PC-9 (cell line): ENCODE measurements at regions of chr16 and their contacts with region 1.

Region 1: DNA sequence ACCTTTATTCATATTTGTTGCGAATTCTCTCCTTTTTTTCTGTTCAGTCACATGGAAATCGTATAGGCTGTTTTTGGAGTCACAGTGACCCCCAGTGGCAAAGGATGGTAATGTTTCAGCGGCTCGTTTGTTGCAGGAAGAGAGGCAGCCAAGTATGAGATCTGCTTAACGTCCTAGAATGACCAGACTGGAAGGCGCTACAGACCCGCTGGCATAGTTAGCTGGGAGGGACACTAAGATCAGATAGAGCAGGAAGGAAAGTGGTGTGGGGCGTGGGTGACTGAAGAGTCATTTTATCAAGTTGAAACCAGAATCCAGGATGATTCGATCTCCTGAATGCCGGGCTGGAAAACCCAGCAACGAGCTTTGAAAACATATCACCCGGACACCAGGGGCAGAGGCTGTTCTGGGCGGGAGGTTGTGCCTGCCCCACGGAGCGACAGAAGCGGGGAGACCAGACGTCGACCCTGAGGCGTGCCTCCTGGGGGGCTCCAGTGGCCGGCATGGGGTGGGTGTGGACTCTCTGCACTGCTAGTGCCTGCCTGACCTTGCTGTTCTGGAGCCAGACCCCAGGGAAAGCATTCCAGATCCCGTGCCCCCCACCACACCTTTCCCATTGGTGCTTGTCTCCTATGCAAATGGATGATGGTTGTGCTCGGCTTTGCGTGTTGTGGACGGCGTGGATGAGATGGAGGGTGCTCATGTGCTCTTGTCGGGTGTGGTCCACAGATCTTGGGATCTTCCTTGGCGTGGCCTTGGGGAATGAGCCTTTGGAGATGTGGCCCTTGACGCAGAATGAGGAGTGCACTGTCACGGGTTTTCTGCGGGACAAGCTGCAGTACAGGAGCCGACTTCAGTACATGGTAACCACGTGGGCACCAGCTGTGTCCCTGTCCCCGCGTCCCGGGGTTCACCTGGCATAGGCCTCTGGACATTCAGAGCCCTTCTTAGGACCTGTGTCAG is 7.7 kb downstream of the IL34 start:
- DNase-seq: peak; percentile 59 to 87
- H3K4me3 ChIP-seq: peak overlapping the region; percentile 33; the same call in 1 of the 2 replicates
- H3K27ac ChIP-seq: no peak overlapping the region
- H3K4me1 ChIP-seq: peaks cover 25% of the 10 kb centered on the region
- H3K27me3 ChIP-seq: no peaks in the 10 kb centered on the region
- CTCF ChIP-seq: peak; percentile 94

Region 2: GRCh38 chr16:70267516-70267915 is 386.6 kb before region 1 on chr16:
- CTCF ChIA-PET with region 1: no interaction called
- POLR2A ChIA-PET with region 1: no interaction called
- intact Hi-C with region 1: no loop called
- DNase-seq: no peak
- H3K4me3 ChIP-seq: no peak overlapping the region
- H3K27ac ChIP-seq: no peak overlapping the region
- H3K4me1 ChIP-seq: no peaks in the 10 kb centered on the region
- H3K27me3 ChIP-seq: no peaks in the 10 kb centered on the region
- CTCF ChIP-seq: peak; percentile 65

Region 3: GRCh38 chr16:70348991-70349390 is 305.1 kb before region 1 on chr16:
- CTCF ChIA-PET with region 1: no interaction called
- POLR2A ChIA-PET with region 1: no interaction called
- intact Hi-C with region 1: no loop called
- DNase-seq: no peak
- H3K4me3 ChIP-seq: no peak overlapping the region
- H3K27ac ChIP-seq: no peak overlapping the region
- H3K4me1 ChIP-seq: peaks cover 13% of the 10 kb centered on the region; the same call in 1 of the 2 replicates
- H3K27me3 ChIP-seq: no peaks in the 10 kb centered on the region
- CTCF ChIP-seq: no peak

Region 4: DNA sequence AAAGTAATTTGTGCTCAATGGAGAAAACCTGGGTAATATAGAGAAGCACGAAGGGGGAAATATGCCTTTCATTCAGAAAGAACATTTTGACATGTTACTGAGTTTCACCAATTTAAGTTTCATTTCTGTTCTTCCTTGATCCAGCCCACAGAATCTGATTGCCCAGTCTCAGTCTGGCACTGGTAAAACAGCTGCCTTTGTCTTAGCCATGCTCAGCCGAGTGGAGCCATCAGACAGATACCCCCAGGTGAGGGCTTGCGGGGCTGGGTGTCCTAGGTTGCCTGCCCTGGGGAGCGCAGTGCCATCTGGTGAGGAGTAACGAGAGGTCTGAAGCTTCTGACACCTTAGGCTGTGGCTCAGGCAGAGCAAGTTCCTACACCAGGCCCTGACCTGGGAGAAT is 289.7 kb before region 1 on chr16:
- CTCF ChIA-PET with region 1: interaction called, 14 read pairs
- POLR2A ChIA-PET with region 1: no interaction called
- intact Hi-C with region 1: no loop called
- DNase-seq: no peak
- H3K4me3 ChIP-seq: no peak overlapping the region
- H3K27ac ChIP-seq: no peak overlapping the region
- H3K4me1 ChIP-seq: no peaks in the 10 kb centered on the region
- H3K27me3 ChIP-seq: no peaks in the 10 kb centered on the region
- CTCF ChIP-seq: no peak

Region 5: DNA sequence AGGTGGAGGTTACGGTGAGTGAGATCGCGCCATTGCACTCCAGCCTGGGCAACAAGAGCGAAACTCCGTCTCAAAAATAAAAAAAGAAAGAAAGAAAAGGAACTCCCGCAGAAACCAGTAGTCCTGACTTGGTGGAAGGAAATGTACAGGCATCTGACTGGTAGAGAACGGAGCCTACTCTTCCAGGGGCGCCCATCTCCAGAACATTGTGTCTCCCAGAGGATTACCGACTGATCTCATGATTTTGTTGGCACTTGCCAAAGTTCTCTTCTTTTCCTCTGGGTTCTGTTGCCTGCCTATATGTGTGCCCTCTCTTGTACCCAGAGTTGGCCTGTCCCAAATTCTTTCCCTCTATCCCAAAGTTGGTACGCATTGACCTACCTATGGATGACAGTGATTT is 283.2 kb before region 1 on chr16:
- CTCF ChIA-PET with region 1: interaction called, 14 read pairs
- POLR2A ChIA-PET with region 1: no interaction called
- intact Hi-C with region 1: loop called (anchors 2 kb)
- DNase-seq: no peak
- H3K4me3 ChIP-seq: no peak overlapping the region
- H3K27ac ChIP-seq: no peak overlapping the region
- H3K4me1 ChIP-seq: no peaks in the 10 kb centered on the region
- H3K27me3 ChIP-seq: no peaks in the 10 kb centered on the region
- CTCF ChIP-seq: no peak

Region 6: DNA sequence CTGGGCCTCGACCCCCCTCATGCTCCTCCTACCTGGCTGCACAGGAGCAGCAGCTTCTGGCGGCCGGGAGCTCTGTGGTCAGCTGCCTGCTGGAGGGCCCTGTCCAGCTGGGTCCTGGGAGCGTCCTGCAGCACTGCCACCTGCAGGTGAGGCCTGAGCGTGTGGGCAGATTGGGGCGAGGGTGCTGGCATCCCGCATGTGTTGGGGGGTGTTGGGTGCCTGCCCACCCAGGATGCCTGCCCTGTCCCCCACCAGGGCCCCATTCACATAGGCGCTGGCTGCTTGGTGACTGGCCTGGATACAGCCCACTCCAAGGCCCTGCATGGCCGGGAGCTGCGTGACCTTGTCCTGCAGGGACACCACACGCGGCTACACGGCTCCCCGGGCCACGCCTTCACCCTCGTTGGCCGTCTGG is 183.2 kb before region 1 on chr16:
- CTCF ChIA-PET with region 1: interaction called, 12 read pairs
- POLR2A ChIA-PET with region 1: no interaction called
- intact Hi-C with region 1: no loop called
- DNase-seq: peak in 1 of 2 experiments; percentile 37
- H3K4me3 ChIP-seq: no peak overlapping the region
- H3K27ac ChIP-seq: no peak overlapping the region
- H3K4me1 ChIP-seq: peaks cover 12% of the 10 kb centered on the region
- H3K27me3 ChIP-seq: no peaks in the 10 kb centered on the region
- CTCF ChIP-seq: peak; percentile 58

Region 7: GRCh38 chr16:70529051-70529777 is 124.9 kb before region 1 on chr16:
- CTCF ChIA-PET with region 1: no interaction called
- POLR2A ChIA-PET with region 1: no interaction called
- intact Hi-C with region 1: loop called (anchors 1 kb)
- DNase-seq: peak in 1 of 2 experiments; percentile 63
- H3K4me3 ChIP-seq: no peak overlapping the region
- H3K27ac ChIP-seq: peak overlapping the region; percentile 64
- H3K4me1 ChIP-seq: peaks cover 35% of the 10 kb centered on the region
- H3K27me3 ChIP-seq: no peaks in the 10 kb centered on the region
- CTCF ChIP-seq: peak; percentile 76

Region 8: GRCh38 chr16:70561623-70562022 is 92.5 kb before region 1 on chr16:
- CTCF ChIA-PET with region 1: interaction called, 7 read pairs
- POLR2A ChIA-PET with region 1: no interaction called
- intact Hi-C with region 1: loop called (anchors 5 kb)
- DNase-seq: peak; percentile 83 to 98
- H3K4me3 ChIP-seq: no peak overlapping the region
- H3K27ac ChIP-seq: peak overlapping the region; percentile 96
- H3K4me1 ChIP-seq: peaks cover 58% of the 10 kb centered on the region
- H3K27me3 ChIP-seq: no peaks in the 10 kb centered on the region
- CTCF ChIP-seq: no peak

Region 9: DNA sequence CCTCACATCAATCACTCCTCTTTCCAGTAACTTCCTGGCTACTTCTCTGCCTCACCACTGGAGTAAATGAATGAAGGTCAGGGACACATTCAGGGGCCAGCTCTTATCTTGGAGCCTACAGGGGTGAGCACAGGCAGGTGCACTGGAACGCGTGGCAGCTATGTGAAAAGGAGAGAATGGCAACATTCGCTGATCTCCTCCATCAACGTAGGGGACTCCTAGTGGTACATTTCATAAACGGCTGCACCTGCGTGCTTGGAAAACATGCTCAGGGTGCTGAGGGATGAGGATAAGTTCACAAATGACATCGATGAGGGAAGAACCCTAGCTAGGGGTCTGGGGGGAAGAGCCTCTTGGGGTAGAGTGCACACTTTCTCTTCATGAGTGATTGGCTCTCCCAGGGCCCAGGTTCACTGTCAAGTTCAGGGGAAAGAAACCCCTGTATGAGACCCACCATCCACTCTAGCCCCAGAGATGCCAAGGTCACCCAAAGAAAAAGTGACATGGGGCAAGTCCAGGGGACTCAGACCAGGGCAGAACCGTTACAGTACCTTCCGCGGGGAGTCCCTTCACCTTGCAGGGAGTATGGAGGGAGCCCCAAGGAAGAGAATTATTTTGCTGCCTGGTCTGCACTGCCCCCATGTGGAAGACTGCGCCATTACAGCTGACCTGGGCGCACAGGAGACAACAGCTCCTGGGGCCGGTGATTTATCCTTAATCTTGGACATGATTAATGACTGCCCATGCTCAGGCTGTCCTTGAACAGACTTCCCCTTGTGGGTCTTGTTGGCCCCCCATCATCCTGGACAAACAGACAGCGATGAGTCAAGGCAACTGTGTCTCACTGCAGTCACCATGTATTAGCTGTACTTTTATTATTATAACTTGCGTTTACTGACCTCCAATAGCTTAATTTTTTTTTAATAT is 116.8 kb after region 1 on chr16:
- CTCF ChIA-PET with region 1: interaction called, 6 read pairs
- POLR2A ChIA-PET with region 1: interaction called, 5 read pairs
- intact Hi-C with region 1: loop called (anchors 2 kb)
- DNase-seq: peak; percentile 67 to 76
- H3K4me3 ChIP-seq: no peak overlapping the region
- H3K27ac ChIP-seq: no peak overlapping the region
- H3K4me1 ChIP-seq: peaks cover 25% of the 10 kb centered on the region
- H3K27me3 ChIP-seq: no peaks in the 10 kb centered on the region
- CTCF ChIP-seq: peak; percentile 98

Region 10: GRCh38 chr16:72124761-72125634 is 1470.9 kb after region 1 on chr16:
- CTCF ChIA-PET with region 1: no interaction called
- POLR2A ChIA-PET with region 1: no interaction called
- intact Hi-C with region 1: no loop called
- DNase-seq: peak; percentile 39 to 60
- H3K4me3 ChIP-seq: no peak overlapping the region
- H3K27ac ChIP-seq: no peak overlapping the region
- H3K4me1 ChIP-seq: no peaks in the 10 kb centered on the region
- H3K27me3 ChIP-seq: peaks cover 21% of the 10 kb centered on the region
- CTCF ChIP-seq: peak; percentile 87